ENCODE measurements at regions of chr12 and their contacts with region 1.

Region 1: DNA sequence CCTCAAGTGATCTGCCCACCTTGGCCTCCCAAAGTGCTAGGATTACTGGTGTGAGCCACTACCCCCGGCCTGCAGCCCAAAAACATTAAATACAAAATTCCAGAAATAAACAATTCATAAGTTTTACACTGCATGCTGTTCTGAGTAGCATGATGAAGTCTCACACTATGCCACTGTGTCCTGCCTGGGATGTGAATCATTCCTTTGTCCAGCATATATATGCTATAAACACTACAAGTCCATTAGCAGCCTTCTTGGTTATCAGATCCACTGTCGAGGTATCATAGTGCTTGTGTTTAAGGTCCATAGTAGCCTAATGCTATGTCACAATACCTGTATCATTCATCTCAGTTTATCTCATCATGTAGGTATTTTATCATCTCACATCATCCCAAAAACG is 15.9 kb downstream of the INTS13 start:
- DNase-seq: no peak
- H3K4me3 Mint-ChIP-seq: no peak overlapping the region
- H3K27ac Mint-ChIP-seq: no peak overlapping the region
- H3K4me1 Mint-ChIP-seq: peaks cover 11% of the 10 kb centered on the region
- H3K27me3 Mint-ChIP-seq: no peaks in the 10 kb centered on the region
- CTCF ChIP-seq: no peak

Region 2: GRCh38 chr12:26817183-26817591 is 104.7 kb before region 1 on chr12:
- CTCF ChIA-PET with region 1: no interaction called
- POLR2A ChIA-PET with region 1: no interaction called
- intact Hi-C with region 1: no loop called
- DNase-seq: no peak
- H3K4me3 Mint-ChIP-seq: no peak overlapping the region
- H3K27ac Mint-ChIP-seq: no peak overlapping the region
- H3K4me1 Mint-ChIP-seq: peaks cover 9% of the 10 kb centered on the region
- H3K27me3 Mint-ChIP-seq: no peaks in the 10 kb centered on the region
- CTCF ChIP-seq: no peak

Region 3: DNA sequence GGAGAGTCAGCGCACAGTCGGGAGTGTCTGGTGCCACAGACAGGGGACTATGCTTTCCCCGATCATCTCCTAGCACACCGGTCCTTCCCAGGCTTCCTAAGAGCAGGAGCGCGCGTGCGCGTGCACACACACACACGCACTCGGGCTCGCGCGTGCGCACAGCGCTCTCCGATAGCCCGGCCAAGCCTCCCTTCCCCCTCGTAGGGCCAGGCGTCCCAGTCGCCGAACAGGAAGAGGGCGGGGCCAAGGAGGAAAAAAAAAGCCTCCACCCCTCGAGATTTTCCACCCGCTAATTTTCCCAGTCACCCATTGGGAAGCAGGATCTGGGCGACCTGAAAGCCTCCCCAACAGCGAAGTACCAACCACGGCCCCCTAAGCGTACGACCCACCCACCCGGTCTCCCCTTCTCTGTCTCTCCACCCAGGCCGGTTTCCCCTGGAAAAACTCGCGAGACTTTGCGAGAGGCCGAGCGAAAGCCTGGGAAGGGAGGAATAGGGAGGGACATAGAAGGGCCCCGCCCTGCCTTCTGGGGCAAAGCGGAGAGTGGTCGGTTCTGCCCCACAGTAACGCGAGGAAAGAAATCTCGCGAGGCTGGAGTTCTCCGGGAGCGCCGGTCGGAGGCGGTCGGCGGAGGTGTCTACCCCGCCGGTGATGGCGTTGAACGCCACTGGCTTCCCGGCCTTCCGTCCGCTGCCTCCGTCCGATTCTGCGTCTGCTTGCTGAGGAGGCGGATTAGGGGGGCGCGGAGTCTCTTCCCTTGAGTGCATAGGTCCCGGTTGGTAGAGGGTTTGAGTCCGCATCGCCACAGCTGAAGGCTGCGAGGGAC is 16.2 kb after region 1 on chr12 and contains the starts of genes FGFR1OP2 and INTS13:
- CTCF ChIA-PET with region 1: interaction called, 4 read pairs
- POLR2A ChIA-PET with region 1: interaction called, 9 read pairs
- intact Hi-C with region 1: loop called (anchors 1 kb)
- DNase-seq: peak; percentile 99
- H3K4me3 Mint-ChIP-seq: peak within 1 kb of the TSS; percentile 91
- H3K27ac Mint-ChIP-seq: peak within 1 kb of the TSS; percentile 97
- H3K4me1 Mint-ChIP-seq: peaks cover 45% of the 10 kb centered on the region
- H3K27me3 Mint-ChIP-seq: no peaks in the 10 kb centered on the region
- CTCF ChIP-seq: no peak
- total RNA-seq, gene FGFR1OP2: 40.6 and 44.6 TPM in 2 replicates
- total RNA-seq, gene INTS13: 64.8 and 67.8 TPM in 2 replicates

Region 4: DNA sequence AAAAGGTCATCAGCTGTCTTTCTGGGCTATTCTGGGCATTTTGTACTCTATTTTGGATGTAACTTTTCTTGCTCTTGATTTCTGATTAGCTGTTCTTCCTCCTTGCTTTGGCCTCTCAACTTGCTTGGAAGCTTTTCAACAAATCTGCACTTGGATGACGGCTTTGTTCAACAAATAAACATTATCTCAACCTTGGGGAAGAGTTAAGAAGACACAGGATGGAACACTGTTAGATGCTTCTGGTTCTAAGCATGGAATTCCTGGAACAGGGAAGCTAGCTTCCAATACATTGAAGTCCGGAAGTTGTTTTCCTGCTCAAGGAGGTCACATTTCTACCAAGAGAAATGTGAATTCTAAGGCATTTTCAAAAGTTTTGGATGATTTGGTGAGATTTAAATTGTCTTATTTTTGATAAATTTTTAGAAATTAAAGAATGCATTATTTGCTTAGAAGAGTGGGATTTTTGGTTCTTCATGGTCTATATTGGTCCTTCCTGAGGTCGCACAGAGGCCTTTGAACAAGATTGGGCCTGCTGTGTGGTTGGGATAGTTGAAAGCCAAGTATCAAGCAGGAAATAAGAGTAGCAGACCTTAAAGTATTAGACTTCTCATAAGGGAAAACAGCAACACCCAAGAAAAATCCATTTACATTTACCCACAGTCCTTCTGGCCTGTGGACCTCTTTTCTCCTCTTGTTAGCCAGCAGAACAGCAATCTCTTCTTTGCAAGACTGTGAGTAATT is 661.3 kb after region 1 on chr12:
- CTCF ChIA-PET with region 1: no interaction called
- POLR2A ChIA-PET with region 1: no interaction called
- intact Hi-C with region 1: no loop called
- DNase-seq: no peak
- H3K4me3 Mint-ChIP-seq: no peak overlapping the region
- H3K27ac Mint-ChIP-seq: peak overlapping the region; percentile 65
- H3K4me1 Mint-ChIP-seq: peaks cover 52% of the 10 kb centered on the region
- H3K27me3 Mint-ChIP-seq: no peaks in the 10 kb centered on the region
- CTCF ChIP-seq: no peak